MCF 10A (cell line): ENCODE measurements at regions of chr4 and their contacts with region 1.

Region 1: DNA sequence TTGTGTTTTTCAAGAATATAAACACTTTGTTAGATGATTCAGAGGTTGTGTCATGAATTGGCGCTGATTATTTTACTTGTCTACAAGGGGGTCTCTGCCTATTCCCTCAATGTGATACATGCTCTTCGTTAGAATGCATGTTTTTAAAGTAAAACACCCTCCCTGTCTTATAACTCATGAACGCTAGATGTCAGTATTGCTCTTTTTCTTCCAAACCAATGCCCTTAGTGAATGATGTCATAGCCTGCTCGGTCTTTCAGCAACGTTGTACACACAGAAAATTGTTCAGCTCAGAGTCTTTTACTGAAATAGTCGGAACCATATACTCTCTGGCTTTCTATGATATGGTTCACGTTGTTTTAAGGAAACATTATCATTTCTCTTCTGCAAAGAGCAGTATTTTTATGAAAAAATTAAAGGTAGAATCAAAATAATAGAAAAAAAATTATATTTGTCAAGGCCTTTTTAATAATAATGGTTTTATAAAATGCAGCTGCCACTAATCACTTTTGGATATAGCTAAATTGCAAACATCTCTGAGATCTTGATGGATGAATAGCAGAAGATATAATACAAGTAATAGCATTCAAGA is 292.9 kb downstream of the TLL1 start:
- DNase-seq: peak; percentile 84
- H3K4me3 Mint-ChIP-seq: no peak overlapping the region
- H3K27ac Mint-ChIP-seq: no peak overlapping the region
- H3K4me1 Mint-ChIP-seq: peaks cover 6% of the 10 kb centered on the region
- H3K27me3 Mint-ChIP-seq: no peaks in the 10 kb centered on the region
- CTCF ChIP-seq: peak; percentile 79

Region 2: DNA sequence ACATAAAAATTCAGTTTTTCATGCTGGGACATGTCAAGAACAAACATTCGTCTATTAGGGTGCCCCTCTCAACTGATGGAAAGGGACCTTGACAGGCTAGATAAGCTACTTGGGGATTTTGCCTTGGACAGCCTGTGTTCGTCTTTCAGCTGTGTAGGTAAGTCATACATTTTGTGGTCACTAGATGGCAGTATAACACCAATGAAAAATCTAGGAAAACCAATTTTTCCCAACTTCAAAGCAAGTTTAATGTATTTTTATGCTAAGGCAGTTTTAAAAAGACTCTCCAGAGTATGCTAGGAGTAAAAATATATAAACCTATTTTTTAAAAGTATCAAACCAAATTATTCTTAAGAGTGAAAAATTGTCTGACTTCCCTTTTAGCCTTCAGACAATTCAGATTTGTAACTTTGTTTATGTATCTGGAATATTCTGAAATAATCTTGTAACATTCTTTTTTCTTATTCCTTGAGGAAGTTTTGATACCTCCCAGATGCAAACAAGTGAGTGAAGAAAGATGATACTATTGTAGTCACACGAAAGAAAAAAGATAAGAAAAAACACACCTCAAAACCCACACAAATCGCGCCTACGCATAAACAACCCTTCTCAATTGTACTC is 628.8 kb before region 1 on chr4:
- CTCF ChIA-PET with region 1: interaction called, 3 read pairs
- POLR2A ChIA-PET with region 1: no interaction called
- intact Hi-C with region 1: loop called (anchors 2 kb)
- DNase-seq: peak; percentile 58
- H3K4me3 Mint-ChIP-seq: no peak overlapping the region
- H3K27ac Mint-ChIP-seq: no peak overlapping the region
- H3K4me1 Mint-ChIP-seq: no peaks in the 10 kb centered on the region
- H3K27me3 Mint-ChIP-seq: no peaks in the 10 kb centered on the region
- CTCF ChIP-seq: peak; percentile 63

Region 3: GRCh38 chr4:166021617-166022016 is 144.3 kb before region 1 on chr4:
- CTCF ChIA-PET with region 1: no interaction called
- POLR2A ChIA-PET with region 1: no interaction called
- intact Hi-C with region 1: no loop called
- DNase-seq: no peak
- H3K4me3 Mint-ChIP-seq: no peak overlapping the region
- H3K27ac Mint-ChIP-seq: no peak overlapping the region
- H3K4me1 Mint-ChIP-seq: peaks cover 9% of the 10 kb centered on the region
- H3K27me3 Mint-ChIP-seq: no peaks in the 10 kb centered on the region
- CTCF ChIP-seq: no peak

Region 4: GRCh38 chr4:166252487-166253402 is 86.8 kb after region 1 on chr4:
- CTCF ChIA-PET with region 1: interaction called, 4 read pairs
- POLR2A ChIA-PET with region 1: no interaction called
- intact Hi-C with region 1: loop called (anchors 1 kb)
- DNase-seq: peak; percentile 47
- H3K4me3 Mint-ChIP-seq: no peak overlapping the region
- H3K27ac Mint-ChIP-seq: no peak overlapping the region
- H3K4me1 Mint-ChIP-seq: no peaks in the 10 kb centered on the region
- H3K27me3 Mint-ChIP-seq: no peaks in the 10 kb centered on the region
- CTCF ChIP-seq: peak; percentile 45

Region 5: DNA sequence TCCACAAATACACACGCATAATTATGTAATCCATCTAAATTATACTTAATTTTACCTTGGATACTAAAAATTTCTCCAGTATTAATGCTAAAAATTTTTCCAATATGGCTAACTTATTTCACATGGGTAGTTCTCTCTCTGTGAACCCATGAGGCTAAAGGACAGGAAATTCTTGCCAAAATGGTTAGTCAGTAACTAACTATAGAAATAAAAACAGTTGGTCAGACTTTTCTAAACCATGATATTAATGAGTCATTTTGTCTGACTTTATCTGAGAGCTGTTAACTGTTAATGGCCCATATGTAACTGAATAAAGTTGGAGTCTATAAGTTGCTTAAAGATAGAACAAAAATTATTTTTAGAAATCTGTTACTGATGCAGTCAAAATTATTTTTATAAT is 256.6 kb after region 1 on chr4:
- CTCF ChIA-PET with region 1: no interaction called
- POLR2A ChIA-PET with region 1: no interaction called
- intact Hi-C with region 1: no loop called
- DNase-seq: peak; percentile 49
- H3K4me3 Mint-ChIP-seq: no peak overlapping the region
- H3K27ac Mint-ChIP-seq: no peak overlapping the region
- H3K4me1 Mint-ChIP-seq: no peaks in the 10 kb centered on the region
- H3K27me3 Mint-ChIP-seq: no peaks in the 10 kb centered on the region
- CTCF ChIP-seq: no peak

Region 6: DNA sequence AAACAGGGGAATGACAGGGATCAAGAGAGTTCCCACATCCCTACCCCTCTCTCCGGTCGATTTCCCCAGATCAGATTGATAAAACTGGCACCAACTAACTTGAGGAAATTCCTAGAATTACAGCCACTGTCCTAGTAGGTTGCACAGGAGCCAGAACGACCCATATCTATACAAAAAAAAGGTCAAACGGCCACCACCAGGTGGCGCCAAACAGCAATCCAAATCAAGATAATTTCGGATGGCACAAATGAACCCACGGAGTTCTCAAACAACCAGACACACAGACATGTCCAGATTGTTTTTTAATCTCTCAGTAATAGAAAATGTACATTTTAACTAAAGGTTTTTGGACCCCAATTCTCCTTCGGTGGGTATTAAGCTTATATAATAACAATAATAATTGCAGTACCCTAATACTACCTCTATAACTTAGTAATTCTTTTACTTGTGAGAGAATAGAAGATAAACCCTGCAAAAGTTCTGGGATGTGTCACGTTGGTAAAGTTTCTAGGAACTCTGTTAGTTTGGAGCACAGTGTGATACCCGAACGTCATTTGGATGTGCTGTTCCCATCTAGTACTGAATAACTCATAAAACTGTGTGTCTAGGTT is 855.7 kb after region 1 on chr4:
- CTCF ChIA-PET with region 1: interaction called, 4 read pairs
- POLR2A ChIA-PET with region 1: no interaction called
- intact Hi-C with region 1: loop called (anchors 5 kb)
- DNase-seq: peak; percentile 78
- H3K4me3 Mint-ChIP-seq: no peak overlapping the region
- H3K27ac Mint-ChIP-seq: no peak overlapping the region
- H3K4me1 Mint-ChIP-seq: peaks cover 5% of the 10 kb centered on the region
- H3K27me3 Mint-ChIP-seq: no peaks in the 10 kb centered on the region
- CTCF ChIP-seq: peak; percentile 82

Region 7: GRCh38 chr4:167290678-167291077 is 1124.8 kb after region 1 on chr4:
- CTCF ChIA-PET with region 1: interaction called, 5 read pairs
- POLR2A ChIA-PET with region 1: no interaction called
- intact Hi-C with region 1: loop called (anchors 2 kb)
- DNase-seq: peak; percentile 33
- H3K4me3 Mint-ChIP-seq: no peak overlapping the region
- H3K27ac Mint-ChIP-seq: no peak overlapping the region
- H3K4me1 Mint-ChIP-seq: no peaks in the 10 kb centered on the region
- H3K27me3 Mint-ChIP-seq: no peaks in the 10 kb centered on the region
- CTCF ChIP-seq: peak; percentile 42

Region 8: GRCh38 chr4:167622481-167623246 is 1456.7 kb after region 1 on chr4:
- CTCF ChIA-PET with region 1: interaction called, 4 read pairs
- POLR2A ChIA-PET with region 1: no interaction called
- intact Hi-C with region 1: loop called (anchors 10 kb)
- DNase-seq: peak; percentile 66
- H3K4me3 Mint-ChIP-seq: no peak overlapping the region
- H3K27ac Mint-ChIP-seq: no peak overlapping the region
- H3K4me1 Mint-ChIP-seq: no peaks in the 10 kb centered on the region
- H3K27me3 Mint-ChIP-seq: no peaks in the 10 kb centered on the region
- CTCF ChIP-seq: peak; percentile 74

Region 9: GRCh38 chr4:168076989-168077725 is 1911.2 kb after region 1 on chr4:
- CTCF ChIA-PET with region 1: no interaction called
- POLR2A ChIA-PET with region 1: no interaction called
- intact Hi-C with region 1: loop called (anchors 5 kb)
- DNase-seq: peak; percentile 76
- H3K4me3 Mint-ChIP-seq: no peak overlapping the region
- H3K27ac Mint-ChIP-seq: no peak overlapping the region
- H3K4me1 Mint-ChIP-seq: no peaks in the 10 kb centered on the region
- H3K27me3 Mint-ChIP-seq: no peaks in the 10 kb centered on the region
- CTCF ChIP-seq: peak; percentile 94